Panc1 (cell line): ENCODE measurements at regions of chr7 and their contacts with region 1.

Region 1: GRCh38 chr7:54773472-54774399 is 14.7 kb upstream of the SEC61G start:
- DNase-seq: peak; percentile 91
- ATAC-seq: peak; percentile 99
- H3K4me3 ChIP-seq: peak overlapping the region; percentile 46 to 59
- H3K27ac ChIP-seq: peak overlapping the region; percentile 66
- H3K4me1 ChIP-seq: no peaks in the 10 kb centered on the region
- H3K27me3 ChIP-seq: peaks cover 5% of the 10 kb centered on the region; the same call in 1 of the 2 replicates
- CTCF ChIP-seq: peak; percentile 96

Region 2: GRCh38 chr7:54672519-54672918 is 101.2 kb before region 1 on chr7:
- CTCF ChIA-PET with region 1: no interaction called
- POLR2A ChIA-PET with region 1: no interaction called
- in situ Hi-C with region 1: no loop called
- intact Hi-C with region 1: no loop called
- DNase-seq: no peak
- ATAC-seq: no peak
- H3K4me3 ChIP-seq: no peak overlapping the region
- H3K27ac ChIP-seq: no peak overlapping the region
- H3K4me1 ChIP-seq: no peaks in the 10 kb centered on the region
- H3K27me3 ChIP-seq: peaks cover 18% of the 10 kb centered on the region
- CTCF ChIP-seq: no peak

Region 3: DNA sequence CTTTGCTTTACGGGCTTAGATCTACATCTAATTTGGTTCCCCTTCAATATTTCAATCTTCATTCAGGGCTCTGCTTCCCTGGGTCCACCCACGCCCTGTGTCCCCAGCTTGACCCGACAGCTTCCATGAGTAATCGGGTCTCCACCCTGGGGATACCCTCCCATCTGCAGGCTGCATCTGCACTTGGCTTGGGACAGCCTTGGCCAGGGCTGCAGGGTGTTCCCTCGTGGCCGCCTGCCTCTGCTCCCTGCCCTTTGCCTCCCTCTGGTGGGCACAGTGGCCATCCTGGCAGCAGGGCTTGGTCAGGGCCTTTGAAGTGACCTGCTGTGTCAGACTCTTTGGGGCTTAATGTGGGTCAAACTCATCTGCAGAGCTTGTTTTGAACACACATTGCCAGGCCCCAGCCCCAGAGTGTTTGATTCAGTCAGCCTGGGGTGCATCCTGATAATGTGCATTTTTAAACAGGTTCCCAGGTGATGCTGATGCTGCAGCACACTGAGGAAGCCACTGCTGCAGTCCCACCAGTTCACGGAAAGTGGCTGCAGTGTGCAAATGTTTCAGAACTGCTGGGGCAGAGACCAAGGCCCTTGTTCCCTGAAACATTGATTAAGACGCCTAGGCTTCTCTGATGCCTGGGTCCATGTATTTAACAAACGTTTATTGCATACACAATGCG is 65.9 kb after region 1 on chr7:
- CTCF ChIA-PET with region 1: interaction called, 3 read pairs
- POLR2A ChIA-PET with region 1: no interaction called
- in situ Hi-C with region 1: no loop called
- intact Hi-C with region 1: loop called (anchors 5 kb)
- DNase-seq: no peak
- ATAC-seq: peak; percentile 98
- H3K4me3 ChIP-seq: no peak overlapping the region
- H3K27ac ChIP-seq: no peak overlapping the region
- H3K4me1 ChIP-seq: no peaks in the 10 kb centered on the region
- H3K27me3 ChIP-seq: no peaks in the 10 kb centered on the region
- CTCF ChIP-seq: peak; percentile 94